ENCODE measurements at regions of chr6 and their contacts with region 1.

Region 1: GRCh38 chr6:131548441-131548840 is 24.6 kb upstream of the ARG1 start:
- DNase-seq: no peak
- ATAC-seq: no peak
- H3K4me3 ChIP-seq: no peak overlapping the region
- H3K27ac ChIP-seq: no peak overlapping the region
- H3K4me1 ChIP-seq: no peaks in the 10 kb centered on the region
- H3K27me3 ChIP-seq: peaks cover 20% of the 10 kb centered on the region
- CTCF ChIP-seq: no peak
- POLR2A ChIP-seq: no peak
- RAD21 ChIP-seq: no peak

Region 2: GRCh38 chr6:130769861-130770260 is 778.6 kb before region 1 on chr6:
- CTCF ChIA-PET with region 1: no interaction called
- POLR2A ChIA-PET with region 1: no interaction called
- dilution Hi-C with region 1: no loop called
- in situ Hi-C with region 1: no loop called
- intact Hi-C with region 1: no loop called
- DNase-seq: no peak
- ATAC-seq: no peak
- H3K4me3 ChIP-seq: no peak overlapping the region
- H3K27ac ChIP-seq: no peak overlapping the region
- H3K4me1 ChIP-seq: peaks cover 2% of the 10 kb centered on the region
- H3K27me3 ChIP-seq: peaks cover 6% of the 10 kb centered on the region; the same call in 1 of the 2 replicates
- CTCF ChIP-seq: no peak
- POLR2A ChIP-seq: no peak
- RAD21 ChIP-seq: no peak

Region 3: DNA sequence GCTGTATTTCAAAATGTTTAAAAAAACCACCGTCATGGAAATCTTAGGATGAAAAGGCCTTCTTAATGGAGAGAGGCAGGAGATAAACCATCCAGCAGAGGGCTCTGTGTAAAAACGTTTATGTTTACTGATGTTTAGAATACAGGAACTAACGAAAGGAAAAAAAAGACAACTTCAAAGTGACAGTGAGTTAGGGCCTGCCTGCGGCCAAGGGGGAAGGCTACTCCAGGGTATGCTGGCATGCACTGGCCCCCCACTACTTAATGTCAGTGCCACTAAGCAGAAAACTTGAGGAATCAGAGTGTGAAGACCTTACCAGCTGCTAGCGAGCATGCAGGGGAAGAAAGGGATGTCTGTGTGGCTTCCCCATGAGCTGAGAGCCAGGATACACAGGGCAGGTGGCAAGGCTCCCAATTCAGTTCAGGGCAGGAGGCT is 365.4 kb before region 1 on chr6:
- CTCF ChIA-PET with region 1: no interaction called
- POLR2A ChIA-PET with region 1: no interaction called
- dilution Hi-C with region 1: no loop called
- in situ Hi-C with region 1: loop called (anchors 10 kb)
- intact Hi-C with region 1: no loop called
- DNase-seq: peak; percentile 56
- ATAC-seq: peak; percentile 85
- H3K4me3 ChIP-seq: no peak overlapping the region
- H3K27ac ChIP-seq: no peak overlapping the region
- H3K4me1 ChIP-seq: peaks cover 2% of the 10 kb centered on the region; the same call in 1 of the 2 replicates
- H3K27me3 ChIP-seq: no peaks in the 10 kb centered on the region
- CTCF ChIP-seq: peak; percentile 65
- POLR2A ChIP-seq: no peak
- RAD21 ChIP-seq: peak; percentile 48

Region 4: DNA sequence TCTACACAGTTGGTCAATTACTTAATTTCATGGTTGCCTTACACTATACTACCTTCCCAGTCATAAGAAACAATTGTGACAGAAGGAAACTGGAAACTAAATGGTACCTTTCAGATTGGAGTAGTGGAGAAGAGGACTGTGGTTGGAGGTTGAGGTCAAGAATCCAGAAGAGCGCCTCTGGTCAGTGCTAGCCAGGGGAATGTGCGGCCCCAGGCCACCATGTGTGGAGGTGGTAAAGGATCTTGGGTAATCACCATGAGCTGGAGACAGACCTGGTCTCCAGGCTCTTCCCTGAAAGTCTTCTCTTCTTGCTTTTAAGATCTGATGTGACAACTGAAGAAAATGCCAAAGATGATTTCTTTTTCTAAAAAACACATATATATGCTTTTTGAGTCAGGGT is 214.7 kb before region 1 on chr6:
- CTCF ChIA-PET with region 1: interaction called, 11 read pairs
- POLR2A ChIA-PET with region 1: no interaction called
- dilution Hi-C with region 1: no loop called
- in situ Hi-C with region 1: no loop called
- intact Hi-C with region 1: no loop called
- DNase-seq: no peak
- ATAC-seq: no peak
- H3K4me3 ChIP-seq: no peak overlapping the region
- H3K27ac ChIP-seq: no peak overlapping the region
- H3K4me1 ChIP-seq: no peaks in the 10 kb centered on the region
- H3K27me3 ChIP-seq: peaks cover 9% of the 10 kb centered on the region
- CTCF ChIP-seq: no peak
- POLR2A ChIP-seq: no peak
- RAD21 ChIP-seq: no peak

Measured in IMR-90 (cell line).